Activated CD4-positive, alpha-beta T cell treated with anti-CD3 and anti-CD28 coated beads, Interleukin-2, amount 10 ng/mL, durations not matched to agents 7 days and 5 days (primary cell): ENCODE measurements at regions of chr3 and their contacts with region 1.

Region 1: DNA sequence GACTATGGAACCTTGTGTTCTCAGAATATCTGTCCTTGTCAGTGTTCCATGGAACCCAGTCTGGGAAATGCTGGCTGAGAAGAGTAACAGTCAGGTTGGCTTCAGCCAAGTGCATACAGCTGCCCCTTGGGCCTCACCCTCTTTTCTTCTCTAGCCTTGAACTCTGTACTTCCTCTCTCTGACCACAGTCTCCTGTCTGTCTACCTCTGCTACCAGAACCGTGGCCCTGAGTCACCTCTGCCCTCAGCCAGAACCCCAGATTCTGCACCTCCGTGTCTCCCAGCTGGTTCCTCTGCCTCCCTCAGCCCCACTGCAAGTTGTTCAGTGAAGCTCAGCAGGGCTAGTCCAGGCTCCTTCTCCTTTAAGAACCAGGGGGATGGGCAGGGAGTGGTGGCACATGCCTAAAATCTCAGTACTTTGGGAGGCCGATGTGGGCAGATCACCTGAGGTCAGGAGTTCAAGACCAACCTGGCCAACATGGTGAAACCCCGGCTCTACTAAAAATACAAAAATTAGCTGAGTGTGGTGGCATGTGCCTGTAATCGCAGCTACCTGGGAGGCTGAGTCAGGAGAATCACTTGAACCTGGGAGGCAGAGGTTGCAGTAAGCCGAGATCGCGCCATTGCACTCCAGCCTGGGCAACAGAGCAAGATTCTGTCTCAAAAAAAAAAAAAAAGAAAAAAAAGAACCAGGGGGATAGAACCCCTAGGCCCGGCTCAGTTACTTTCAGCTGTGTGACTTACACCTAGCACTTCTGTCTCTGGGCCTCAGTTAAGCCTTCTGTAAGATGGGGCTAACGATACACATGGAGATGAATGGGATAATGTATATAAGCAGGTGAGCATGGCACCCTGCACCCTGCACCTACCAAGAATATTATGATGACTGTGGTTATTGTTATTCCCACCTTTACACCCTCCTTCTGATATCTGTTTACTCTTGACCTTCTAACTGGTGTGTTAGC is 24.3 kb upstream of the TATDN2 start:
- DNase-seq: peak; percentile 63
- H3K4me3 Mint-ChIP-seq: peak overlapping the region; percentile 21
- H3K27ac Mint-ChIP-seq: peak overlapping the region; percentile 78
- H3K4me1 Mint-ChIP-seq: peaks cover 79% of the 10 kb centered on the region
- H3K27me3 Mint-ChIP-seq: no peaks in the 10 kb centered on the region

Region 2: DNA sequence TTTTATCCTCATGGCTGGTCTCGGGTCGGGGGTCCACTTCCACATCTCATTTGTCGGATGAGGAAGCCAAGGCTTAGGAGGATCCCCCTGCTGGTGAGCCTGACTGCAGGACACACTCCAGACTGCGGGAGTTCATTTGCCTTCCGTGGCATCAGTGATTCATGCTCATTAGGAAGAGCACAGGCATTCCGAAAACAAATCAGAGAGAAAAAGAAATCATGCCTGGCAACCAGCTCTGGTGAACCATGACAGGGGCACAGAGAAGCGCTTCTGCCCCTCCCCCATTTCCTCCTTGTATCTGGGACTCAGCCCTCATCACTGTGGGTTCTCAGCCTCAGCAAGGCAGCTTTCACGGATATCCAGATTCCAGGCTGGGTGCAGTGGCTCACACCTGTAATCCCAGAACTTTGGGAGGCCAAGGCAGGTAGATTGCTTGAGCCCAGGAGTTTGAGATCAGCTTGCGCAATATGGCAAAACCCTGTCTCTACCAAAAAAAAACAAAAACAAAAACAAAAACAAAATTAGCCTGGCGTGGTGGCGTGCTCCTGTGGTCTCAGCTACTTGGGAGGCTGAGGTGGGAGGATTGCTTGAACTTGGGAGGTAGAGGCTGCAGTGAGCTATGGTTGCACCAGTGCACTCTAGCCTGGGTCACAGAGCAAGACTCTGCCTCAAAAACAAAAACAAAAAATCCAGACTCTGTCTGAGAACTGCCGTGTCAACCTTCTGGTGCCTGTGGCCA is 30.8 kb before region 1 on chr3:
- CTCF ChIA-PET with region 1: interaction called, 10 read pairs
- POLR2A ChIA-PET with region 1: interaction called, 4 read pairs
- DNase-seq: peak; percentile 69
- H3K4me3 Mint-ChIP-seq: peak overlapping the region; percentile 52
- H3K27ac Mint-ChIP-seq: peak overlapping the region; percentile 98
- H3K4me1 Mint-ChIP-seq: peaks cover 83% of the 10 kb centered on the region
- H3K27me3 Mint-ChIP-seq: no peaks in the 10 kb centered on the region